Activated T-helper 2 cell treated with anti-CD3 and anti-CD28 coated beads, Interferon-gamma antibody, Interleukin-2, Interleukin-4, amounts not matched to agents 10 μg/mL and 5 μg/mL and 100 μg/mL, durations not matched to agents 14 hours and 24 hours and 36 hours (primary cell): ENCODE measurements at regions of chr7 and their contacts with region 1.

Region 1: DNA sequence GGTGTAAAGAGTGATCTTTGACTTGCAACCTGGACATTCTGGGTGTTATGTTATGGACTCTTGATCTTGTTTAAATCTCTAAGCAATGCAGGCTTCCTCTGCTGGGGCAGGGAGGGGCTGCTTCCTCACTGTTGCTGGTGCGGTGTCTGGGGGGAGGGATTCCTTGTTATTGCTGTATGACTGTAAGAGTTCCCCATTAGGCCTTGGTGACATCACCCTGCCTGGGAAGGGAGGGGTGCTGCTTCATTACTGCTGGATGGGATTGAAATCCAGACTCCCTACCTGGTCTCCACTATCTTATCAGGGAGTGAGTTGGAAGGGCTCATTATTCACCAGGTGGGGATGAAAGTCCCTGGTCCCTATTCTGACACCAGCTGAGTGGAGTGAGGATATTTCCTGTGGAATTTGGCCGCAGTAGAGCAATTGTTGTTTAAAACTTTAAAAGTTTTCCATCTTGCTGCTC is 8.8 kb downstream of the OGDH start:
- DNase-seq: no peak
- H3K4me3 Mint-ChIP-seq: no peak overlapping the region
- H3K27ac Mint-ChIP-seq: peak overlapping the region; percentile 80
- H3K4me1 Mint-ChIP-seq: peaks cover 50% of the 10 kb centered on the region
- H3K27me3 Mint-ChIP-seq: no peaks in the 10 kb centered on the region

Region 2: DNA sequence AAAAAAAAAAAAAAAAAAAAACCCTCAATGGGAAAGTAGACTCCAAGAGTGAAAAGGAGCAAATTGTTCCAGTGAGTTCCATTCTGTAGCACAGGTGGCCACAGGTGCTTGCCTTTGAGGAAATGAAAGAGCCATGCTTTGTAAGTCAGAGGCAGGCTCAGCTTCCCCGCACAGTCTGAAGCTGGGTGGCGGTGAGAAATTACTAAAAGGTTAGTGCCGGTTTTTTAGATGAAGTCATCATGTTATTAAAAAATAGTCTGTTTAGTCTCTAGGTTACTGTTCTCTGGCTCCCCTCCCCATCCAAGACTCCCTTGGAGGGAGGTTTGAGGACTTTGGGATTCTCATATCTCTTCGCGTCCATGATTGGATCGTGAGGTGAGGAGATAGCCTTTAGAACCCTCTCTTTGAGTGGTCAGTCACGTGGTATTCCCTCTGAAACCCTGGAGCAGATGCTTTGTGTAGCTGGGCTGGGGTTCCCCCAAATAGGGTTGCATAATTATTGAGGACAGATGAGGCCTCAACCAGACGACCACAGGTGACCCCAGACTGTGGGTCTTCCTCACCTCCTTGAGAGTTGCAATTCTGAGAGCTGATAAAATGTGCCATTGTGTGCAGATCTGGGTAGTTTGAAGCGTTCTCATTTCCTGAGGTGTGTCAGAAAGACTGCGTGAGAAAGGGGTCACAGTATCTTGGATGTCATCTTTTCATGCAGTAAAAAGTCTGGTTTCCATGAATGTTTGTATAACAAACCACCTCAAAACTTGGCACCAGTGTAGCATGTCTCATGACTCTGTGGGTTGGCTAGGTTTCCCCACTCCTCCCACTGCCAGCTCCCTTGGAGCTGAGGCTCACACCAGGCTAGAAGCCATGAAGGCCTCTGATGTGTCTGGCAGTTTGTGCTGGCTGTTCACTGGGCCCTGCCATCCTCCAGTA is 18.3 kb after region 1 on chr7:
- intact Hi-C with region 1: loop called (anchors 1 kb)
- DNase-seq: peak; percentile 63
- H3K4me3 Mint-ChIP-seq: peak overlapping the region; percentile 45
- H3K27ac Mint-ChIP-seq: peak overlapping the region; percentile 89
- H3K4me1 Mint-ChIP-seq: peaks cover 72% of the 10 kb centered on the region
- H3K27me3 Mint-ChIP-seq: no peaks in the 10 kb centered on the region

Region 3: DNA sequence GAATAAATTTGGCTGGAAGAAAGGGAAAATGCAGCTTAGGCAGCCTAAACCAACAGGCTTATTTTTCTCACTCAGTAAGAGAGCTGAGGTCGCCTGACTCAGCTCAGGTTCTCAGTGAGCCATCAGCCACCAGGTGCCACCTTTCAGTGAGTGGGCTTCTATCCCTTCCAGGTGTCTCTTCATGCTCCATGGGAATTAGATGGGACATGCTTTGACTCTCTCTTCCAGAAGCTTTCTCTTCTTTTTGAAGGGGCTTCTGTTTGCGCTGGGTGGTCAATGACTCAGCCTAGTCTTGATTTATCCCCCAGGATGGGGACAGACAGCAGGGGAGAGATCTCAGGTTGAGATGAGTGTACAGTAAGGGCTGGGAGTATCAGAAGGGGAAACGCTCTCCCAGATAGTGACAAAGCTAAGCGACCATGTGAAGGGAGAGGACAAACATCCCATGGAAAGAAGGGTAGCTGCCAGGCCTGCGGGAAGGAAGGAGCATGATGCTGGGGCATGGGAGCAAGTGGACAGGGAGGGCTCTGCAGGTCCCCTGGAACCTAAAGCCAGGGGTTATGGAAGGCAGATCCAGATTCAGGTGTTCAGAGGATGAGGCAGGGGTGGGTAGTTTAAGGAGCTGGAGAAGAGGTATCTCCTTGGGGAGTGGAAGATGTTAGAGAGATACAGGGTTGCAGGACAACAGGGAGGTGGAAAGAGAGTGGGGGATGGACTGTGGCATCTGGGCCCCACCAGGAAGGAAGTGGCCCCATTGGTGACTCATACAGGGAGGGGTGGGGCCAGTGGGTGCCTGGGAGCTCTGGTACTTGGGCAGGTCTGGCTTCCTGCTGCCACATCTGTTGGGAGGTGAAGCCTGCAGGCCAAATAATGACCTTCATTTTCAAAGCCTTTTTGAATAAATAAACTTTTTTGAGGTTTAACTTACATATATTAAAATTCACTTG is 23.7 kb after region 1 on chr7:
- intact Hi-C with region 1: loop called (anchors 1 kb)
- DNase-seq: peak; percentile 84
- H3K4me3 Mint-ChIP-seq: peak overlapping the region; percentile 79
- H3K27ac Mint-ChIP-seq: peak overlapping the region; percentile 99
- H3K4me1 Mint-ChIP-seq: peaks cover 70% of the 10 kb centered on the region
- H3K27me3 Mint-ChIP-seq: no peaks in the 10 kb centered on the region

Region 4: DNA sequence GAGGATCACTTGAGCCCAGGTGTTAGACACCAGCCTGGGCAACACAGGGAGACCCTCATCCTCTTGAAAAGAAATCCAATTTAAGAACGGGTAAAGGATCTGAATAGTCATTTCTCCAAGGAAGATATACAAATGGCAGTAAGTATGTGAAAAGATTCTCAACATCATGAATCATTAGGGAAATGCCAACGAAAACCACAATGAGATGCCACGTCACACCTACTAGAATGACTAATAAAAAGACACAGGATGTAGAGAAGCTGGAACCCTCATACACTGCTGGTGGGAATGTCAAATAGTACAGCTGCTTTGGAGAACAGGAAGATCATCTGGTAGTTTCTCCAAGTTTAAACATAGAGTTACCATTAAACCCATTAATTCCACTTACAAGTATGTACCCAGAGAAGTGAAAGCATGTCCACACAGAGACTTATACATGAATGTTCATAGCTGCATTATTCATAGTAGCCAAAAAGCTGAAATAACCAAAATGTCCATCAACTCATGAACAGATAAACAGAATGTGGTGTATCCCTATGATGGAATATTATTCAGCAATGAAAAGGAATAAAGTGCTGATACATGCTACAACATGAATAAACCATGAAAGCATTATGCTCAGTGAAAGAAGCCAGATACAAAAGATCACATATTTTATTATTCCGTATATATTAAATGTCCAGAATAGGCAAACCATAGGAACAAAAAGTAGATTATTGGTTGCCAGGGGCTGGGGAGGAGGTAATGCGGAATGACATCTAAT is 120.4 kb after region 1 on chr7:
- intact Hi-C with region 1: loop called (anchors 5 kb)
- DNase-seq: no peak
- H3K4me3 Mint-ChIP-seq: no peak overlapping the region
- H3K27ac Mint-ChIP-seq: peak overlapping the region; percentile 89
- H3K4me1 Mint-ChIP-seq: peaks cover 11% of the 10 kb centered on the region
- H3K27me3 Mint-ChIP-seq: no peaks in the 10 kb centered on the region

Region 5: DNA sequence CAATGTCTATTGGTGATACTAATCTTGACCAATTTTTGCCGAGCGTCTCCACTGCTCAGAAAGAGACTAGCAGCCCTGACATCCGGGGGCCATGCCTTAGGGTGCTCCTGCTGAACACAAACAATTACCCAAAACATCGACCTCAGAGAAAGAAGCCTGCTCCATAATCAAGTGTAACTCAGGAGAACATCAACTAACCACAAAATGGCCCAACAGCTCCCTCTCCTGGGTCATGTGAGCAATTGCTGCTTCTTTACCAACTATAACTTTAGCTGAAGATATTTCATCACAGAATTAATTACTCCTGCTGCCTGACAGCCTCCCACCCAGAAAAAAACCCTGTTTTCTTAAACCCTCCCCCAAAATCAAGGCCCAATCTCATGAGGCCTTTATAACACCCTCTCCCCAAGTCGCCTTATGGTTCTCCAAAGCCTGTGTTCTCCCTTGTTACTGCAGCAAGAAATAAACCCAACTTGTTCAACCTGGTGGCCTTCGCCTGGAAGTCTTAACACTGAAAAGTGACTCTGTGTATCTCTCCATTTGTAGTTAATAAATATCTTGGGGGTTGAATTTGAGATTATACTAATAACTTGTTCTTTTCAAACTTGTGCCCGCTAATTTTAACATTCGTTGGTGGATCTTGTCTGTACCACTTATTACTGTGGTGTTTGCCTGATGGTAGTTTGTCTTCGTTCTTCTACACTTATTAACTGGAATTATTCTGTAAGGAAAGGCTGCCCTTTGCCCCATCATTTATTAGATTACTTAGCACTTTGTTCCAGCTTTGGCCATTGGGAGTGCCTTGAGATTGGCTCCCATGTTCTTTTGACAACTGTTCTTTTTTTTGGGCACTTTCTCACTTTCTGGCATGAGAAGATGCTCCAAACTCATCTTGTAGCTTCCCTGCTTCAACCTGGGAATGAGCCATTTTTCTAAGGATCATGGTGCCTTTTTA is 521.2 kb after region 1 on chr7:
- intact Hi-C with region 1: no loop called
- DNase-seq: peak; percentile 52
- H3K4me3 Mint-ChIP-seq: no peak overlapping the region
- H3K27ac Mint-ChIP-seq: no peak overlapping the region
- H3K4me1 Mint-ChIP-seq: peaks cover 16% of the 10 kb centered on the region
- H3K27me3 Mint-ChIP-seq: peaks cover 15% of the 10 kb centered on the region